ENCODE measurements at regions of chr12 and their contacts with region 1.

Region 1: GRCh38 chr12:124453419-124454351 is 113.7 kb downstream of the NCOR2 start:
- DNase-seq: peak; percentile 93

Region 2: DNA sequence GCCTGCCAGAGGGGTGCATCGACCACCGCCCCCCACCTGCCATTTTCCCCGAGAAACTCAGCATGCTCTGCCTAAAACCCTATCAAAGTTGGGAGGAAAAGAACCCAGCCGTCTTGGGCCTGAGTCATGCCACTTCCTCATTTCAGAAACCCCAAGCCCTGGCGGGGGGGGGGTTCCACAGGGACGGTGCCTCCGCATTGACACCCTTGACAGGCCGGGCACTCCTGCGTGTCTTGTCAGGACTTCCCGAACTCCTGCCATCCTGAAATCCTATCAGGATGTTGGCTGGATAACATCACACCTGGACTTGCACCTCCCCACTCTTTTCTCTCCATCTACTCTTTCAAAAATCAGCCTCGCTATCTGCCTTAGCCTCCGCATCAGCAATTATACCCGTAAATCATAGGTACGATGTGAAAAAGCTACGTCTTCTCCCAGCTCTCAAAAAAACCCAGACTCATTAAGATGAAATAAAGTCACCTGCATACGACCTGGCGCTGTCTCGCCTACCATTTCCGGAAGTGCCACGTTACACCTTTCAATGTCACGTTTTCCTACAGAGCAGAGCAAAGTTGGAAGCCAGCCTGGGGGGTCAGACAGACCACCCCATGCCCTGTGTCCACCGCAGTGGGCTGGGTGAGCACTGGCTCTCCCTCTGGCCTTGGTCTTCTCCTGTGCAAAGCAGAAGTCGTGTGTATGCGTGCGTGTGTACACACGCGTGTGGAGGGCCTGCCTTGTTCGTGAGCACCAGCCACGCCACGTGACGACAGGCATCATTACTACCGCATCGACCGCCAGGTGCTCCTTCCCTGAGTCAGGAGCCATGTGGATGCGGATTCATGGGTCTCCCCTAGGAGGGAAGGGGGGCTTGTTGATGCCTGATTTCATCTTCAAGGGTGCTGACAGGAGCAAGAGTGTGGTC is 62.1 kb before region 1 on chr12:
- intact Hi-C with region 1: loop called (anchors 2 kb)
- DNase-seq: peak; percentile 89

Region 3: GRCh38 chr12:124422570-124423523 is 30.8 kb before region 1 on chr12:
- intact Hi-C with region 1: loop called (anchors 2 kb)
- DNase-seq: peak; percentile 93

Region 4: DNA sequence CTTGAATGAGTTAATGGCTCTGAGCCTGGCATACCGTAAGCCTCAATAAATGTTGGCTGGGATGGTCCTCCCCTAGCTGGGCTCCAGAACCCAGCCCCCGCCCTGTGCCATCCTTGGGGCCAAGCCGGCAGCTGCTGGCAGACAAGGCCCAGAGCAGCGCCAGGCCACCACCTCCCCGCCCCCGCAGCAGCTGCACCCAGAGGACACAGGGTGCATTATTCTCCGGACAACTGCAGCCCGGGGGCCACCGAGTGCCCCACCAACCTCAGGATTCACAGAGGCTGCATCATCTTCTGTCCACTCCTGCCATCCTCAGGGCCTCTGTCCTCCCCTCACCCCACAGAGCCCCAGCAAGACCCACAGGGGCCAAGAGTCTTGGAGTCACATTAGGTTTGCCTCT is 21.0 kb after region 1 on chr12:
- intact Hi-C with region 1: loop called (anchors 2 kb)
- DNase-seq: no peak

Region 5: GRCh38 chr12:124745891-124746570 is 292.3 kb after region 1 on chr12:
- intact Hi-C with region 1: loop called (anchors 5 kb)
- DNase-seq: peak; percentile 95

Measured in cardiac septum (tissue), 1 donor.